Activated CD4-positive, alpha-beta T cell treated with anti-CD3 and anti-CD28 coated beads for 36 hours (primary cell): ENCODE measurements at regions of chr15 and their contacts with region 1.

Region 1: GRCh38 chr15:63212050-63213004 is 22.9 kb downstream of the RAB8B start:
- DNase-seq: peak; percentile 44
- ATAC-seq: peak; percentile 70
- H3K4me3 Mint-ChIP-seq: peak overlapping the region; percentile 53
- H3K27ac Mint-ChIP-seq: peak overlapping the region; percentile 98
- H3K4me1 Mint-ChIP-seq: peaks cover 91% of the 10 kb centered on the region
- H3K27me3 Mint-ChIP-seq: no peaks in the 10 kb centered on the region

Region 2: GRCh38 chr15:63157118-63157843 is 55.0 kb before region 1 on chr15 and contains the start of gene RPS27L:
- CTCF ChIA-PET with region 1: no interaction called
- POLR2A ChIA-PET with region 1: interaction called, 3 read pairs
- intact Hi-C with region 1: loop called in 1 of 2 experiments (anchors 2 kb)
- DNase-seq: peak; percentile 95
- ATAC-seq: peak; percentile 98
- H3K4me3 Mint-ChIP-seq: peak within 1 kb of the TSS; percentile 100
- H3K27ac Mint-ChIP-seq: peak within 1 kb of the TSS; percentile 98
- H3K4me1 Mint-ChIP-seq: peaks cover 19% of the 10 kb centered on the region
- H3K27me3 Mint-ChIP-seq: no peaks in the 10 kb centered on the region
- total RNA-seq, gene RPS27L: 117 to 143 TPM

Region 3: DNA sequence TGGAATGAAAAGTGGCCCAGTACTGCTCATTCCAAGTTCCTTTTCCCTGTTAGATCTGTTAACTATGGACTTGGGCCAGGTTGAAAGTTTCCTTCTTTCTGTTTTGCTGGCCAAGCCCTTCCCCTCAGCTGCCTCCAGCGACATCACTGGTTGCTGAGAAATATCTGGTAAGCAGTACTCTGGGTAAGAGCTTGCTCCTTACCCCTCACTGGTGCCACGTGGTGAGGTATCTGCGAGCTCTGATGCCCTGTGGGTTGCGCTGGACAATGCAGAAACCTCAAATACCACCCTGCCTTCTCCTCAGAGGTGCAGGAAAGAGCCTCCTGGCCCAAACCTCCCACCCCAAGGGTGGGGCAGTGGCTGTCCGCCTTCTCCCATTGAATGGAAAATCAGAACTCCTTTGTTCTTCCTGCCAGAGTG is 22.1 kb after region 1 on chr15:
- CTCF ChIA-PET with region 1: interaction called, 13 read pairs
- POLR2A ChIA-PET with region 1: interaction called, 8 read pairs
- intact Hi-C with region 1: loop called (anchors 2 kb)
- DNase-seq: no peak
- ATAC-seq: no peak
- H3K4me3 Mint-ChIP-seq: no peak overlapping the region
- H3K27ac Mint-ChIP-seq: peak overlapping the region; percentile 67
- H3K4me1 Mint-ChIP-seq: peaks cover 79% of the 10 kb centered on the region
- H3K27me3 Mint-ChIP-seq: no peaks in the 10 kb centered on the region

Region 4: GRCh38 chr15:63374686-63375520 is 162.6 kb after region 1 on chr15:
- CTCF ChIA-PET with region 1: no interaction called
- POLR2A ChIA-PET with region 1: no interaction called
- intact Hi-C with region 1: loop called in 1 of 2 experiments (anchors 5 kb)
- DNase-seq: peak; percentile 73
- ATAC-seq: peak; percentile 25
- H3K4me3 Mint-ChIP-seq: peak overlapping the region; percentile 15
- H3K27ac Mint-ChIP-seq: peak overlapping the region; percentile 67
- H3K4me1 Mint-ChIP-seq: peaks cover 51% of the 10 kb centered on the region
- H3K27me3 Mint-ChIP-seq: peaks cover 24% of the 10 kb centered on the region

Region 5: DNA sequence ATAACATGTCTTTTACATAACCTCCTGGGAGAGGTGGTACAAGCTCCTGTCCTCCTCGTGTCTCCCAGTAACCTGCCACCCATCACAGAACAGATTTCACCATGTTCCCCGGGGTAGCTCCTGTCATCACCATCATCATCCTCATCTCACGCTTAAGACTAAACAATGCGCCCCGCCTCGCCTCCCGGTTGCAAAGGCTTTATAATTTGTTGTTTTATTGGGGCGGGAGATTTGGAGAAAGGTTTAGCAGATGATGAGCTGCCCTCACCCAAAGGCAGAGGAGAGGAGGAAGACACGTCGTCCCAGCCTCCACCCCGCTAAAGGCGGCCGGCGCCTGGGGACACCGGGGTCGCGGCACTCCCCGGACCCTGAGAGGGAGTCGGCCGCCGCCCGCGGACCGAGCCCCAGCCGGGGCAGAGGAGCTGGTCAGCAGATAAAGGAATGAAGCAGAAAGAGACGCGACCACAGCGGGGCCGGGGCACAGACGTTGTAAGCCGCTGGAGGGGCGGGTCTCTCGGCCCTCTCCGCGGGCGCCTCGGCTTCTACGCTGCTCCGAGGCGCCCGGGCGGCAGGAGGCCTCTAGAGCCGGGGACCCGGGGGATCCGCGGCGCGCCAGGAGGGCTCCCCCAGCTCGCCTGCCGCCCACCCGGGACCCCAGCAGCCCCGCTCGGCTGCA is 620.8 kb after region 1 on chr15:
- CTCF ChIA-PET with region 1: no interaction called
- POLR2A ChIA-PET with region 1: no interaction called
- intact Hi-C with region 1: loop called in 1 of 2 experiments (anchors 10 kb)
- DNase-seq: peak; percentile 64
- ATAC-seq: peak; percentile 50
- H3K4me3 Mint-ChIP-seq: peak overlapping the region; percentile 87
- H3K27ac Mint-ChIP-seq: peak overlapping the region; percentile 91
- H3K4me1 Mint-ChIP-seq: peaks cover 50% of the 10 kb centered on the region
- H3K27me3 Mint-ChIP-seq: no peaks in the 10 kb centered on the region